Right ventricle myocardium inferior (tissue), 1 donor: ENCODE measurements at regions of chr12 and their contacts with region 1.

Region 1: DNA sequence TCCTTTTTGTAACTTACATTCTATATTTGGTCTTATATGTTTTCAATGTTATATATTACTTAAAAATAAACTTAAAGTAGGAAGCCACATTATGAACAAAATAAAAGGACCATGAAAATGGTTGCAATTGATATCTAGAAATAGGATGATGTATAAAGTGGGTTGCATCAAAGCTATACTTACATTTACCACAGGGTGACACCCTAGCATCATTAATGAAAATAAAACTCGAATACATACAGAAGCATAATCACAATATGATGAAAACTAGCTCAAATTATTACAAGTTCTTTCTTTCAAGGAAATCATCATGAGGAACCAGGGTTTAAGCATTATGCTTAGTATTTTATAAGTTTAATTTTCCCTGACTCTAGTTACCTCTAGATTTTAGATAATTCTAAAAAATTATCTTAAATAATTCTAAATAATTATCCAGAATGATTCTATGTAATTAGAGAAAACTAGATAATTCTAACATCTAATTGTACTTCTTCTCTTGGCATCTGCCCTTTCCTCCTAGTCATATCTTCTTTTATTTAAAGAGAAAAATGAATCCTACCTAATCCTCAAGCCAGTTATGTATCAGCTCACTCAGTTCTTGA is 31.2 kb downstream of the TAS2R7 start:
- DNase-seq: no peak
- ATAC-seq: no peak

Region 2: GRCh38 chr12:10716704-10717315 is 54.4 kb before region 1 on chr12:
- intact Hi-C with region 1: no loop called
- DNase-seq: peak; percentile 81
- ATAC-seq: peak; percentile 91

Region 3: DNA sequence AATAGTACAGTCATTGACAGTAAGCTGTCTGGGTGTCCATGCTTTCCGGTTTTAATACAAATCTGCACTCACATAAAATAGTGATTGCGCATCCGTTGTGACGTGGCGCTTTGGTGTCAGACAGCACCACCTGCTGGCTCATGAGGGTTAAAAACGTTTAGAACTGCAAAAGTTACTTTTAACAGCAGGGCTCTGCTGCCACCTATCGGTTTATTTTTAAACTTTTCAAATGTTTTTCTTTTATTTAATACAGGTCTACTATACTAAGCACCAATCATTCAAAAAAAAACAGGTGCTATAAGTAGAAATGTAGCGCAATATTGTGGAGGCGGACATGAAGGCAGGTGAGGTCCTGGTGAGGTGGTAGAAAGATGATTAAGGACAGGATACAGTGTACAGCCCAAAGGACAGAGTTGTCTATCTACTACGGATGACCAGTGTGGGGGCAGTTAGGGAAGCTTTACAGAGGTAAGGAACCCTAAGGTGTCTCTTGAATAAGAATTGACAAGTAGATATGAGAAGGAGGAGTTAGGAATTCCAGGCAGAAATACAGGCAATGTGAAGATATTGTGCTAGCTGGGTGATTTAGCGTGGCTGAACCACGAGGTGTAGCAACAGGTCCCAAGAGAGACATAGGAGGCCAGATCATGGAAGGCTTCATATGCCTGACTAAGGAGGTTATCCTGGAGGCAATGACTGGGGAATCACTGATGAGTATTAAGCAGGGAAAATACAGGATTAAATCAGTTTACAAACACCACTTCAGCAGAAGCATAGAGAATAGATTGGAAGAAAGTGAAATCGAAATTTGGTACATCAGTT is 715.6 kb after region 1 on chr12:
- intact Hi-C with region 1: loop called (anchors 2 kb)
- DNase-seq: peak; percentile 78
- ATAC-seq: peak; percentile 59